Dorsolateral prefrontal cortex (tissue), 120 donors: ENCODE measurements at regions of chr16 and their contacts with region 1.

Region 1: GRCh38 chr16:48041861-48042480 is 113.8 kb downstream of the ABCC12 start:
- DNase-seq: peak in 1 of 10 donors; percentile 42
- H3K4me3 ChIP-seq: no peak overlapping the region
- H3K27ac ChIP-seq: no peak overlapping the region
- H3K27me3 ChIP-seq: peaks cover 0 to 6% (median 0%) of the 10 kb centered on the region in 45 donors
- CTCF ChIP-seq: no peak

Region 2: GRCh38 chr16:47815655-47816054 is 226.3 kb before region 1 on chr16:
- intact Hi-C with region 1: loop called in 1 of 2 experiments (anchors 10 kb)
- DNase-seq: no peak
- H3K4me3 ChIP-seq: no peak overlapping the region
- H3K27ac ChIP-seq: no peak overlapping the region
- H3K27me3 ChIP-seq: no peaks in the 10 kb centered on the region
- CTCF ChIP-seq: no peak